HCT116 (cell line): ENCODE measurements at regions of chrX and their contacts with region 1.

Region 1: GRCh38 chrX:129726307-129727111 is 12.3 kb upstream of the XPNPEP2 start:
- DNase-seq: peak; percentile 28
- ATAC-seq: peak; percentile 91
- H3K4me3 ChIP-seq: no peak overlapping the region
- H3K27ac ChIP-seq: no peak overlapping the region
- H3K4me1 ChIP-seq: no peaks in the 10 kb centered on the region
- H3K27me3 ChIP-seq: no peaks in the 10 kb centered on the region
- CTCF ChIP-seq: peak; percentile 59 to 78 (median 65); a peak in 5 of 6 replicates
- POLR2A ChIP-seq: no peak
- RAD21 ChIP-seq: peak; percentile 86

Region 2: GRCh38 chrX:129347291-129347690 is 379.2 kb before region 1 on chrX:
- CTCF ChIA-PET with region 1: no interaction called
- POLR2A ChIA-PET with region 1: no interaction called
- RAD21 ChIA-PET with region 1: no interaction called
- intact Hi-C with region 1: no loop called
- DNase-seq: peak; percentile 4
- ATAC-seq: peak; percentile 85
- H3K4me3 ChIP-seq: no peak overlapping the region
- H3K27ac ChIP-seq: no peak overlapping the region
- H3K4me1 ChIP-seq: no peaks in the 10 kb centered on the region
- H3K27me3 ChIP-seq: no peaks in the 10 kb centered on the region
- CTCF ChIP-seq: peak in 2 of 3 experiments; percentile 46 to 47; a peak in 4 of 6 replicates
- POLR2A ChIP-seq: no peak
- RAD21 ChIP-seq: no peak

Region 3: GRCh38 chrX:129637217-129638109 is 89.0 kb before region 1 on chrX:
- CTCF ChIA-PET with region 1: interaction called, 10 read pairs
- POLR2A ChIA-PET with region 1: no interaction called
- RAD21 ChIA-PET with region 1: no interaction called
- intact Hi-C with region 1: loop called (anchors 1 kb)
- DNase-seq: peak; percentile 36
- ATAC-seq: peak; percentile 86
- H3K4me3 ChIP-seq: no peak overlapping the region
- H3K27ac ChIP-seq: no peak overlapping the region
- H3K4me1 ChIP-seq: peaks cover 0 to 4% of the 10 kb centered on the region in 2 experiments; a peak in 1 of 4 replicates
- H3K27me3 ChIP-seq: no peaks in the 10 kb centered on the region
- CTCF ChIP-seq: peak; percentile 64 to 88 (median 85); a peak in 5 of 6 replicates
- POLR2A ChIP-seq: no peak
- RAD21 ChIP-seq: peak; percentile 74

Region 4: DNA sequence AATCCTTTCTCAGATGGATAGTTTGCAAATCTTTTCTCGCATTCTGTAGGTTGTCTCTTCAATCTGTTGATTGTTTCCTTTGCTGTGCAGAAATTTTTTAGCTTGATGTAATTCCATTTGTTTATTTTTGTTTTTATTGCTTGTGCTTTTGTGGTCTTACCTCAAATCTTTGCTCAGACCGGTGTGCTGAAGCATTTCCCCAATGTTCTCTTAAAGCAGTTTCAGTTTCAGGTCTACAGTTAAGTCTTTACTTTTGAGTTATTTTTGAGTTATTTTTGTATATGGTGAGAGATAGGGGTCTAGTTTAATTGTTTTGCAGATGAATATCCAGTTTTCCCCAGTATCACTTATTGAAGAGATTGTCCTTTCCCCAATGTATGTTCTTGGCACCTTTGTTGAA is 595.0 kb after region 1 on chrX:
- CTCF ChIA-PET with region 1: no interaction called
- POLR2A ChIA-PET with region 1: no interaction called
- RAD21 ChIA-PET with region 1: no interaction called
- intact Hi-C with region 1: no loop called
- DNase-seq: no peak
- ATAC-seq: no peak
- H3K4me3 ChIP-seq: no peak overlapping the region
- H3K27ac ChIP-seq: no peak overlapping the region
- H3K4me1 ChIP-seq: no peaks in the 10 kb centered on the region
- H3K27me3 ChIP-seq: no peaks in the 10 kb centered on the region
- CTCF ChIP-seq: no peak
- POLR2A ChIP-seq: no peak
- RAD21 ChIP-seq: no peak